Colonic mucosa (tissue), 4 donors: ENCODE measurements at regions of chr10 and their contacts with region 1.

Region 1: GRCh38 chr10:112137154-112137987 is 46.2 kb downstream of the GPAM start:
- DNase-seq: peak; percentile 77
- H3K4me3 ChIP-seq: no peak overlapping the region
- H3K27ac ChIP-seq: no peak overlapping the region
- H3K4me1 ChIP-seq: no peaks in the 10 kb centered on the region
- H3K27me3 ChIP-seq: no peaks in the 10 kb centered on the region
- CTCF ChIP-seq: peak; percentile 94

Region 2: GRCh38 chr10:111756217-111757061 is 380.9 kb before region 1 on chr10:
- intact Hi-C with region 1: loop called (anchors 10 kb)
- DNase-seq: peak; percentile 21
- H3K4me3 ChIP-seq: no peak overlapping the region
- H3K27ac ChIP-seq: no peak overlapping the region
- H3K4me1 ChIP-seq: no peaks in the 10 kb centered on the region
- H3K27me3 ChIP-seq: no peaks in the 10 kb centered on the region
- CTCF ChIP-seq: no peak

Region 3: DNA sequence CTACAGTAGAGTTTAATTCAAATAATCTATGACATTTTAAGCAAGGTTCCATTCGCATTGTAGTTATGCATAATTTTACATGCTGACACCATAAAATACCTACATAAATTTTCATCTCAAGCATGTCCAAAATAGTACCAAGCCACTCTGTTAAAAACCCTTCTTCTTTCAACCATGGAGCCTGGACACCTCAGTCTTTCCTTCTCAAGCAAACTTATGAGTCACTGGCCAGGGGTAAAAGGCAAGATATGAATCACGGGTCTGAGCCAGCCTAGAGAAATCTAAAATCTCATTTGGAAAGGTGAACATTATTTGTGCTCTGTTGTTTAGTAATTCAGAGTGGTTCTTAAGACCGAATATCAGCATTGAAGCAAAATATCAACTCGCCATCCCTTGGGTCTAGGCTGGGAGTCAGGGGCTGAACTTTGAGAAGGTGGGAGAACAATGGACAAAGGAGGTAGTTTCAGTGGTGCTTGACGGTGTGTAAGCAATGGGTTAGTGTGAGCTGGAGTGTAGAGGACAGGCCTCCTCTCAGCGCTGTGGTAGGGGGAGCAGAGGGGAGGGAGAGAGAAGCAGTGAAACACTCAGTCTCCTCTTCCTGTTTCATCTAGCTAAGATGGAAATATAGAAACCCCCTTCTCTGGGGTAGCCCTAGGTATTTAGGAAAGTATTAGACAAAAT is 65.3 kb after region 1 on chr10:
- intact Hi-C with region 1: no loop called
- DNase-seq: no peak
- H3K4me3 ChIP-seq: no peak overlapping the region
- H3K27ac ChIP-seq: no peak overlapping the region
- H3K4me1 ChIP-seq: no peaks in the 10 kb centered on the region
- H3K27me3 ChIP-seq: no peaks in the 10 kb centered on the region
- CTCF ChIP-seq: no peak